ENCODE measurements at regions of chr3 and their contacts with region 1.

Region 1: GRCh38 chr3:52278510-52279069 is at the start of gene WDR82:
- DNase-seq: peak; percentile 98
- ATAC-seq: peak; percentile 97
- total RNA-seq, gene WDR82: 57.6 to 65.5 TPM

Region 2: GRCh38 chr3:52240059-52240879 is 38.3 kb before region 1 on chr3:
- intact Hi-C with region 1: loop called in 1 of 2 experiments (anchors 5 kb)
- DNase-seq: peak; percentile 57
- ATAC-seq: no peak

Region 3: DNA sequence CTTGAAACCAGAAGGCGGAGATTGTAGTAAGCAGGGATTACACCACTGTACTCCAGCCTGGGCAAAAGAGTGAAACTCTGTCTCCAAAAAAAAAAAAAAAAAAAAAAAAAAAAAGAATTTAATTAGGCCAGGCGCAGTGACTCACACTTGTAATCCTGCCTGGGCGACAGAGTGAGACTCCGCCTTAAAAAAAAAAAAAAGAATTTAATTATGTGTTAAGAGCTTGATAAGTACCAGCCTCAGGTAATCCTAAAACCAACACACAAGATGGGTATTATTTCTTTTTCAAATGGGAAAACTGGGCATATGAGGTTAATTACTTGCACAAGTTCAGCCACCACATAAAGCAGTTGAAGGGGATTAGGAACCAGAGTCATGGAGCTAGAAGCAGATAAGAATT is 358.1 kb after region 1 on chr3:
- intact Hi-C with region 1: no loop called
- DNase-seq: no peak
- ATAC-seq: peak in 1 of 2 donors; percentile 22

Measured in left cardiac atrium (tissue), 4 donors.